GM12878 (cell line): ENCODE measurements at regions of chr10 and their contacts with region 1.

Region 1: DNA sequence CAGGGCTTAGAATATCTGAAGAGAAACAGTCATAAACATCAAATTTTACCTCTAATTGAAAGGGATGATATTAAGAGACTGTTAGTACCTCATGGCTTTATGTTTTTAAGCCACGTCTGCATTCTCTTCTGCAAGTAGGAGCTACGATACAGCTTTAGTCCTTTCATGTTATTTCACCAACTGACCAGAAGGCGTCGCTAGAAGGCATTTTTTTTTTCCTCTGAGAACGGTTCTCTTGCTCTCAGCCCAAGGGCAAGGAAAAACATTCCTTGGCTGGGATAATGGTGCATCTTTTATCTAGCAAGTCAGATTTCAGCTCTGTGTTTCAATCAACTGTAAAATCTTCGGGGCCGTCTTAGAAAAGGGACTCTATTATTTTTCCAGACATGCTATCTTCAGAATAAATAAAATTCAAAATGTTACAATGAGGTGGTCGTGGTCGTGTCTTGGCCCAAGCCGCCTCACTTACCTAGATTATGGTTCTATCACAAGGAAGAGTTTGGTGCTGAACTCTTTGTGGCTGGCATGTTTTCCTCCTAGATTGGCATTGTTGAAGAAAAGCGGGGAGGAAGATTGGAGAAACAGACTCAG is 41.6 kb upstream of the LYZL2 start:
- DNase-seq: no peak
- ATAC-seq: peak; percentile 78
- H3K4me3 ChIP-seq: no peak overlapping the region
- H3K27ac ChIP-seq: no peak overlapping the region
- H3K4me1 ChIP-seq: peaks cover 10% of the 10 kb centered on the region
- H3K27me3 ChIP-seq: no peaks in the 10 kb centered on the region
- CTCF ChIP-seq: peak; percentile 69 to 79 (median 73)
- EP300 ChIP-seq: no peak
- POLR2A ChIP-seq: no peak
- RAD21 ChIP-seq: peak; percentile 73

Region 2: DNA sequence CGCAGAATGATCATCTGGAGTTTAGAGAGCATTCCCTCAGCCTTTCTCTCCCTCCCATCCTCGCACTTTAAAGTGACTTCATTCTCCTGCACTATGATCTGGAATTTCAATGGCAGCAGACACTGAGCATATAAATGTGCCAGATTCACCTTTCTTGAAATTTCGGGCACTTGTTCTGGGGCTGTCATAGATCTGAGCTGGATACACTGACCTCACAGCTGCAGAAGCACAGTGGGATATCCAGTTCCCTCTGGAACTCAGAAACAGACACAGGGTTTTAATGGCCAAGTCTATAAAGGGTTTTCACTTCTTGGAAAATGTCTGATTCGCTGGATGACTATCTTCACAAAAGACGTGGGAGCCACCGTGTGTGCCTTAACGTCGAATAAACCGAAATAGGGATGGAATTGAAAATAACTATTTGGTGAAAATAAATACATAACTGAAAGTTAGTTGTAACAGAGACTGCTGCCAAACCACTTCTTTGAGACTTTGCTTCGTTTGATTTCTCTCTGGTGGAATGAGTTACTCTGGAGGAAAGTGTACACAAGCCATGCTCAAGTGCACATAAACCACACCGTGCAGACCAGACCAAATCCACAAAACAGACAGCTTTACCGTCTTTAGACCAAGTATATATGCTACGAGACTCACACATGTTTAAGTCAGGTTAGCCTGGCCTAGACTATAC is 1162.4 kb before region 1 on chr10:
- CTCF ChIA-PET with region 1: no interaction called
- POLR2A ChIA-PET with region 1: no interaction called
- RAD21 ChIA-PET with region 1: no interaction called
- SMC1A ChIA-PET with region 1: no interaction called
- in situ Hi-C with region 1: loop called (anchors 5 kb)
- intact Hi-C with region 1: no loop called
- DNase-seq: no peak
- ATAC-seq: no peak; the same call in 2 of the 3 replicates
- H3K4me3 ChIP-seq: no peak overlapping the region
- H3K27ac ChIP-seq: no peak overlapping the region
- H3K4me1 ChIP-seq: no peaks in the 10 kb centered on the region
- H3K27me3 ChIP-seq: no peaks in the 10 kb centered on the region
- CTCF ChIP-seq: no peak
- EP300 ChIP-seq: no peak
- POLR2A ChIP-seq: no peak
- RAD21 ChIP-seq: no peak

Region 3: GRCh38 chr10:30639946-30640786 is 31.0 kb before region 1 on chr10:
- CTCF ChIA-PET with region 1: interaction called, 36 read pairs
- POLR2A ChIA-PET with region 1: no interaction called
- RAD21 ChIA-PET with region 1: no interaction called
- SMC1A ChIA-PET with region 1: interaction called, 9 read pairs
- in situ Hi-C with region 1: no loop called
- intact Hi-C with region 1: no loop called
- DNase-seq: no peak
- ATAC-seq: peak; percentile 37; the same call in 1 of the 3 replicates
- H3K4me3 ChIP-seq: no peak overlapping the region
- H3K27ac ChIP-seq: no peak overlapping the region
- H3K4me1 ChIP-seq: no peaks in the 10 kb centered on the region
- H3K27me3 ChIP-seq: peaks cover 0 to 1% of the 10 kb centered on the region in 2 experiments; a peak in 3 of 4 replicates
- CTCF ChIP-seq: peak; percentile 78 to 81 (median 81)
- EP300 ChIP-seq: no peak
- POLR2A ChIP-seq: no peak
- RAD21 ChIP-seq: peak; percentile 56

Region 4: DNA sequence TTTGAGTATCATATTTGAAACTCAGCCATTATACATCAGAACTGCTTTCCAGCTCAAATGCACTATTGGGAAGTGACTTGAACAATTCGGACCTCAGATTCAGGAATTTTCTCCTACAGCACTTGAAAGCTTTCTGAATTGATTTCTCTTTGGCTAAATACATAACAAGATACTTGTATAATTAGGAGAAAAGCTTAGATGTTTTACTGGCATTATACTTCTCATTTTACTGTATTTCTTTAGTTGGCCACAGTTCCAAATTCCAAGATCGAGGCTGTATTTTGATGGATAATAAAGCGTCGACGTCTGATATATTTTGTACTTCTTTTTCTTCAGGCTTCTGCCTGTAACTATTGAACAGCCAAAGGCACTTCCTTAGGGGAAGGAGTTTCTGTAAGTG is 14.9 kb before region 1 on chr10:
- CTCF ChIA-PET with region 1: interaction called, 21 read pairs
- POLR2A ChIA-PET with region 1: no interaction called
- RAD21 ChIA-PET with region 1: interaction called, 3 read pairs
- SMC1A ChIA-PET with region 1: no interaction called
- in situ Hi-C with region 1: no loop called
- intact Hi-C with region 1: no loop called
- DNase-seq: no peak
- ATAC-seq: no peak
- H3K4me3 ChIP-seq: no peak overlapping the region
- H3K27ac ChIP-seq: no peak overlapping the region
- H3K4me1 ChIP-seq: no peaks in the 10 kb centered on the region
- H3K27me3 ChIP-seq: no peaks in the 10 kb centered on the region
- CTCF ChIP-seq: no peak
- EP300 ChIP-seq: no peak
- POLR2A ChIP-seq: no peak
- RAD21 ChIP-seq: no peak

Region 5: GRCh38 chr10:30687698-30688219 is 16.6 kb after region 1 on chr10:
- CTCF ChIA-PET with region 1: interaction called, 50 read pairs
- POLR2A ChIA-PET with region 1: no interaction called
- RAD21 ChIA-PET with region 1: interaction called, 9 read pairs
- SMC1A ChIA-PET with region 1: interaction called, 30 read pairs
- in situ Hi-C with region 1: no loop called
- intact Hi-C with region 1: no loop called
- DNase-seq: no peak
- ATAC-seq: peak; percentile 97
- H3K4me3 ChIP-seq: no peak overlapping the region
- H3K27ac ChIP-seq: no peak overlapping the region
- H3K4me1 ChIP-seq: peaks cover 5% of the 10 kb centered on the region; the same call in 1 of the 2 replicates
- H3K27me3 ChIP-seq: no peaks in the 10 kb centered on the region
- CTCF ChIP-seq: peak; percentile 88 to 93 (median 89)
- EP300 ChIP-seq: no peak
- POLR2A ChIP-seq: no peak
- RAD21 ChIP-seq: peak; percentile 90

Region 6: GRCh38 chr10:30701451-30702173 is 30.5 kb after region 1 on chr10:
- CTCF ChIA-PET with region 1: interaction called, 12 read pairs
- POLR2A ChIA-PET with region 1: no interaction called
- RAD21 ChIA-PET with region 1: interaction called, 3 read pairs
- SMC1A ChIA-PET with region 1: interaction called, 9 read pairs
- in situ Hi-C with region 1: no loop called
- intact Hi-C with region 1: no loop called
- DNase-seq: peak; percentile 87
- ATAC-seq: peak; percentile 69
- H3K4me3 ChIP-seq: peak overlapping the region; percentile 27; the same call in 1 of the 2 replicates
- H3K27ac ChIP-seq: peak overlapping the region; percentile 99
- H3K4me1 ChIP-seq: peaks cover 43% of the 10 kb centered on the region
- H3K27me3 ChIP-seq: no peaks in the 10 kb centered on the region
- CTCF ChIP-seq: no peak
- EP300 ChIP-seq: peak; percentile 0 to 28; a peak in 2 of 4 replicates
- POLR2A ChIP-seq: peak; percentile 65
- RAD21 ChIP-seq: no peak

Region 7: GRCh38 chr10:30940256-30940655 is 269.1 kb after region 1 on chr10:
- CTCF ChIA-PET with region 1: no interaction called
- POLR2A ChIA-PET with region 1: no interaction called
- RAD21 ChIA-PET with region 1: no interaction called
- SMC1A ChIA-PET with region 1: no interaction called
- in situ Hi-C with region 1: no loop called
- intact Hi-C with region 1: no loop called
- DNase-seq: no peak
- ATAC-seq: no peak
- H3K4me3 ChIP-seq: no peak overlapping the region
- H3K27ac ChIP-seq: no peak overlapping the region
- H3K4me1 ChIP-seq: no peaks in the 10 kb centered on the region
- H3K27me3 ChIP-seq: no peaks in the 10 kb centered on the region
- CTCF ChIP-seq: no peak
- EP300 ChIP-seq: no peak
- POLR2A ChIP-seq: no peak
- RAD21 ChIP-seq: no peak

Region 8: DNA sequence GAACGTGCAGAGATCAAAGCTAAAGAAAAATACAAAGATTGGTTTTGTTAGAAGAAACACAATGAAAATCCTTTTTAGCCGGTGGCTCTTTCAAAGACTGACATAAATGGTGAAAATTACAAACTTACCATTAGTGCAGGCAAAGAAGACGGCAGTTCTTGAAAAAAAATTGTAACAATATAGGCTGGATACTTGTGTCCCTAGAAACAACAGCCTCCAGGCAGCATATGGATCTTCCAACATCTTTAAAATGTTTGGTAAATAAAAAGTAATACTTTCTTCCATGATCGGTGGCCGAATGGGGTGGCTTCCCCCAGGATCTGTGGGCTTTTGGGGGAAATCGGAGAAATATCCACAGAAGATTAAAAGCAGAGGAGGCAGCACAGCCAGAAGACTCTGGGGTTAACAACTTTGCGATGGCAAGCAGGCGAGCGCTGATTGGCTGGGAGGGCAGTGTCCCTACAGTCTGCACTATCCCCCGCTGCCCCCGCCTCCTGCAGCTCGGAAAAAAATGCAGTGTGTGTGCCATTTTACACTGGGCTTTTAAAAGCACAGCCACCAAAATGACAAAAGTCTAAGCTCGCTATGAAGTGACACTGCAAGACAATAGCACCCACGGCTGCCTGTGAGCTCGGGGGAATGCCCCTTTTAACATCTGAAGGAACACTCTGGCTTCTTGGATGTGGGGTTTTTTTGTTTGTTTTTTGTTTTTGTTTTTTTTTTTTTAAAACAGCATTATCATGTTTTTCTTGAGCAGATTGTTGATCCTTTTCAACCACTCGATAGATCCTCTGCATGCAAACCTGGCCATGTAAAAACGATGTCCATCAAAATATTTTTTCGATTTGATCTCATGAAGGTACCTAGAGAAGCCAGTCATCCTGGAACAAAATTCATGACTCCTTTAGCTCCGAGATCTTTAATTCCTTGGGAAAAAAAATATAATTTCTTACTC is 1707.5 kb after region 1 on chr10:
- CTCF ChIA-PET with region 1: no interaction called
- POLR2A ChIA-PET with region 1: no interaction called
- RAD21 ChIA-PET with region 1: no interaction called
- SMC1A ChIA-PET with region 1: no interaction called
- in situ Hi-C with region 1: no loop called
- intact Hi-C with region 1: no loop called
- DNase-seq: peak; percentile 72
- ATAC-seq: peak; percentile 96
- H3K4me3 ChIP-seq: peak overlapping the region; percentile 77
- H3K27ac ChIP-seq: peak overlapping the region; percentile 75
- H3K4me1 ChIP-seq: no peaks in the 10 kb centered on the region
- H3K27me3 ChIP-seq: no peaks in the 10 kb centered on the region
- CTCF ChIP-seq: no peak
- EP300 ChIP-seq: no peak
- POLR2A ChIP-seq: peak; percentile 74
- RAD21 ChIP-seq: no peak